Left cardiac atrium (tissue), 4 donors: ENCODE measurements at regions of chr20 and their contacts with region 1.

Region 1: GRCh38 chr20:2523919-2524708 is 12.3 kb upstream of the TMC2 start:
- DNase-seq: peak; percentile 88
- ATAC-seq: peak; percentile 81 to 84

Region 2: GRCh38 chr20:2402271-2402980 is 121.7 kb before region 1 on chr20:
- intact Hi-C with region 1: no loop called
- DNase-seq: no peak
- ATAC-seq: no peak

Region 3: GRCh38 chr20:2643708-2644107 is 119.6 kb after region 1 on chr20:
- intact Hi-C with region 1: loop called in 1 of 2 experiments (anchors 10 kb)
- DNase-seq: no peak
- ATAC-seq: no peak